B cell (primary cell): ENCODE measurements at regions of chr6 and their contacts with region 1.

Region 1: DNA sequence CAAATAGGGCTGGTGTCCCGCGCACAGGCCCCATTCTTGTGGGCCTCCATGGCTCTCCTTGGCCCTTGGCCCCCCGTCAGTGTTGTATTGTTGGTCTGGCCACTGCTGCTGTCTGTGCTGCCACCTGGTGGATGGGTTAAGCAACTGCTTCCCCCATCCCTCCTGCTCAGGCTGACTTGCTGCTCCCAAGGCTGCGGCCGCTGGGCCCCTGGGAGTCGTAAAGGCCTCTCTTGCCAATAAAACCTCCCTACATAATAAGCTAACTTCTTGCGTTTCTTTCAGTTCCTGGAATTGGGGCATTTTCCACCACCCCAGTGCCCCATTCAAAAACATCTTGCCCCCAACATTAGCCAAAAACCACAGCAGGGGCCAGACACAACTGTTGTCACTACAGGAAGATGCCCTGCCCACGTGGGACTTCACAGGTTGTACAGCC is 27.1 kb downstream of the CD83 start:
- DNase-seq: peak; percentile 85
- ATAC-seq: peak; percentile 83
- H3K4me3 ChIP-seq: no peak overlapping the region
- H3K4me3 Mint-ChIP-seq: no peak overlapping the region
- H3K27ac ChIP-seq: no peak overlapping the region
- H3K27ac Mint-ChIP-seq: peak overlapping the region; percentile 8
- H3K4me1 ChIP-seq: peaks cover 17 to 18% of the 10 kb centered on the region in 2 donors
- H3K4me1 Mint-ChIP-seq: peaks cover 59% of the 10 kb centered on the region
- H3K27me3 ChIP-seq: no peaks in the 10 kb centered on the region
- H3K27me3 Mint-ChIP-seq: no peaks in the 10 kb centered on the region
- CTCF ChIP-seq: peak; percentile 91

Region 2: DNA sequence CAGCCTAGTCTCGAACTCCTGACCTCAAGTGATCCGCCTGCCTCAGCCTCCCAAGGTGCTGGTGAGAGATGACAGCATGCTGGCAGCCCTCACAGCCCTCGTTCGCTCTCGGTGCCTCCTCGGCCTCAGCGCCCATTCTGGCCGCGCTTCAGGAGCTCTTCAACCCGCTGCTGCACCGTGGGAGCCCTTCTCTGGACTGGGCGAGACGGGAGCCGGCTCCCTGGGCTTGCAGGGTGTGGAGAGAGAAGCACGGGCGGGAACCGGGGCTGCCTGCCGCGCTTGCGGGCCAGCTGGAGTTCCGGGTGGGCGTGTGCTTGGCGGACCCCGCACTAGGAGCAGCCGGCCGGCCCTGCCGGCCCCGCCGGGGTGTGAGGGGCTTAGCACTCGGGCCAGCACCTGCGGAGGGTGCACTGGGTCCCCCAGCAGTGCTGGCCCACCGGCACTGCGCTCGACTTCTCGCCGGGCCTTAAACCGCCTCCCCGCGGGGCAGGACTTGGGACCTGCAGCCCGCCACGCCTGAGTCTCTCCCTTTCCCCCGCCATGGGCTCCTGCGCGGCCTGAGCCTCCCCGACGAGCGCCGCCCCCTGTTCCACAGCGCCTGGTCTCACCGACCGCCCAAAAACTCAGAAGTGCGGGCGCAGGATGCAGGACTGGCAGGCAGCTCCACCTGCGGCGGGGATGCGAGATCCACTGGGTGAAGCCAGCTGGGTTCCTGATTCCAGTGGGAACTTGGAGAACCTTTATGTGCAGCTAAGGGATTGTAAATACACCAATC is 401.5 kb before region 1 on chr6:
- CTCF ChIA-PET with region 1: no interaction called
- POLR2A ChIA-PET with region 1: no interaction called
- intact Hi-C with region 1: no loop called
- DNase-seq: no peak
- ATAC-seq: no peak
- H3K4me3 ChIP-seq: peak overlapping the region in 2 of 5 experiments; percentile 9 to 10
- H3K4me3 Mint-ChIP-seq: peak overlapping the region; percentile 13
- H3K27ac ChIP-seq: no peak overlapping the region
- H3K27ac Mint-ChIP-seq: no peak overlapping the region
- H3K4me1 ChIP-seq: no peaks in the 10 kb centered on the region
- H3K4me1 Mint-ChIP-seq: peaks cover 2% of the 10 kb centered on the region
- H3K27me3 ChIP-seq: no peaks in the 10 kb centered on the region
- H3K27me3 Mint-ChIP-seq: peaks cover under 1% of the 10 kb centered on the region
- CTCF ChIP-seq: no peak

Region 3: DNA sequence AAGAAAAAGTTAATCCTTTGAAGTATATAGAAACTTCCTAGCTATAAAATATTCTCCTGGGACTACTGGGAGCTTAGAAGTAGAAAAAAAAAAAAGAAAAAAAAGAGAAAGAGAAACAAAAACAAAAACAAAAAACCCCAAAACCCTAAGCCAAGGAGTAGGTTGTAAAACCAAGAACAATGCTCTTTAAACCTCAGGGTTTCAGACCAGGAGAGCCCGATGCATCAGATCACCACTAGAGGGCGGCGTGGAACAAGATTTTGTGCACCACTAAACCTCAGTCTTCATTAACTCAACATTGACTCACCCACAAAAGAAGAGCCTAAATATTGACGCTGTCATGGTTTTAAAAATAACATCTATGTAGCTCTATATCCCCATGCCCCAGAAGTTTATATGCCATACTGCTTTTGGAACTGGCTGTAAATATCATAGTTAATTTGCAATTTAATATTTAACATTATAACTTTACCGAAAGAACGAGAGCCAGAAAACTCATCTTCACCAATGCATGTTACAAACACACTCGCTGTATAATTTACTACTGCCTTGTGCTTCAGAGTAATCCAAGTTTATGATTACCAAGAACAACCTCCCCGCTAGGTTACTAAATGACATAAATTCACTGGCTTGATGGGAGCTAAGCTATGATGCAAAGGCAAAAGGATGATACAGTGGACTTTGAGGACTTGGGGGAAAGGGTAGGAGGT is 349.5 kb before region 1 on chr6:
- CTCF ChIA-PET with region 1: interaction called, 4 read pairs
- POLR2A ChIA-PET with region 1: no interaction called
- intact Hi-C with region 1: loop called (anchors 1 kb)
- DNase-seq: peak; percentile 81
- ATAC-seq: peak; percentile 91
- H3K4me3 ChIP-seq: no peak overlapping the region
- H3K4me3 Mint-ChIP-seq: no peak overlapping the region
- H3K27ac ChIP-seq: no peak overlapping the region
- H3K27ac Mint-ChIP-seq: no peak overlapping the region
- H3K4me1 ChIP-seq: no peaks in the 10 kb centered on the region
- H3K4me1 Mint-ChIP-seq: peaks cover 2% of the 10 kb centered on the region
- H3K27me3 ChIP-seq: no peaks in the 10 kb centered on the region
- H3K27me3 Mint-ChIP-seq: no peaks in the 10 kb centered on the region
- CTCF ChIP-seq: peak; percentile 93

Region 4: DNA sequence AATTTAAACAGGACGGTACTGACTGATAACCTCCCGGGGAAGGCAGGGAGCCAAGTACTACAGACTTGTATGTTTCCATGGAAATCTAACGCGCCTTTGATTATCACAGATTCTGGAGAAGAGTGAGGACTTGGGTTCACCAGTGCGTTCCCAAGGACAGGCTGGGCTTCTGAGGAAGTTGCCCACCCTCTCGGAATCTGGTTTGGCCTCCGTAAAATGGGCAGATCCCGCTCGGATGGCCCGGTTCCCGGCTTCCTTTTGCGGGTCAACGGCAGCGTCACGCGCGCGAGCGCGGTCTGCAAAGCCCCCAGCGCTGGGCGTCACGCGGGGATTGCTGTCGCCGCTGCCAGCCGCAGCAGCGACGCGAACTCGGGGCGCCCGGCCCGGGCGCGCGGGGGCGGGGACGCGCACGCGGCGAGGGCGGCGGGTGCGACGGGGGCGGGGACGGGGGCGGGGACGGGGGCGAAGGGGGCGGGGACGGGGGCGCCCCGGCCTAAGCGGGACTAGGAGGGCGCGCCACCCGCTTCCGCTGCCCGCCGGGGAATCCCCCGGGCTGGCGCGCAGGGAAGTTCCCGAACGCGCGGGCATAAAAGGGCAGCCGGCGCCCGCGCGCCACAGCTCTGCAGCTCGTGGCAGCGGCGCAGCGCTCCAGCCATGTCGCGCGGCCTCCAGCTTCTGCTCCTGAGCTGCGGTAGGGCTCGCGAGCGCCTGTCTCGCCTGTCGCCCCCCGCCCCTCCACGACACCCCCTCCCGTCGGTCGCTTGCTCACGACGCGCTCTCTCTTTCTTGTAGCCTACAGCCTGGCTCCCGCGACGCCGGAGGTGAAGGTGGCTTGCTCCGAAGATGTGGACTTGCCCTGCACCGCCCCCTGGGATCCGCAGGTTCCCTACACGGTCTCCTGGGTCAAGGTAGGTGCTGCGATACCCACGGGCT is 27.3 kb before region 1 on chr6 and contains the start of gene CD83:
- CTCF ChIA-PET with region 1: no interaction called
- POLR2A ChIA-PET with region 1: no interaction called
- intact Hi-C with region 1: loop called (anchors 2 kb)
- DNase-seq: peak; percentile 97
- ATAC-seq: peak; percentile 80
- H3K4me3 ChIP-seq: peak within 1 kb of the TSS; percentile 75 to 100 (median 94)
- H3K4me3 Mint-ChIP-seq: peak within 1 kb of the TSS; percentile 93
- H3K27ac ChIP-seq: peak within 1 kb of the TSS; percentile 99
- H3K27ac Mint-ChIP-seq: peak within 1 kb of the TSS; percentile 97
- H3K4me1 ChIP-seq: peaks cover 37 to 44% of the 10 kb centered on the region in 2 donors
- H3K4me1 Mint-ChIP-seq: peaks cover 37% of the 10 kb centered on the region
- H3K27me3 ChIP-seq: no peaks in the 10 kb centered on the region
- H3K27me3 Mint-ChIP-seq: no peaks in the 10 kb centered on the region
- CTCF ChIP-seq: no peak
- total RNA-seq, gene CD83: 332 and 339 TPM in 2 replicates

Region 5: DNA sequence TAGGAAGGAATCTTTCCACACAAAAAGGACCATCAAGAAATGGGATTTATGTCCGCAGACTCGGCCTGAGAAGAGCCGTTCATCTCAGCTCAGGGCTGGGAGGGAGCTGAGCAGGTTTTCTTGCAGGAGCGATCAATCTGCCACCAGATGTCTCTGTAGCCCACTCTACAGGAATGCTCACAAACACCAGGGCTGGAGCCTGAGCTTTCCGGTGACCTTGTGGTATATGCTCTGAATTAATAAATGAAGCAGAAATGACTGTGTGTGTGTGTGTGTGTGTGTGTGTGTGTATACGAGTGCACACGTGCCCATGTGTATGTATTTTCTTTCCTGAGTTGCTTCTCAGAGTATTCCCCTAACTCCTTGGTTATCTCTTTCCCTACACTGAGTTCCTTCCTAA is 15.1 kb before region 1 on chr6:
- CTCF ChIA-PET with region 1: interaction called, 44 read pairs
- POLR2A ChIA-PET with region 1: interaction called, 4 read pairs
- intact Hi-C with region 1: no loop called
- DNase-seq: peak; percentile 69
- ATAC-seq: no peak
- H3K4me3 ChIP-seq: peak overlapping the region in 1 of 5 experiments; percentile 15
- H3K4me3 Mint-ChIP-seq: peak overlapping the region; percentile 82
- H3K27ac ChIP-seq: peak overlapping the region in 1 of 2 donors; percentile 43
- H3K27ac Mint-ChIP-seq: peak overlapping the region; percentile 80
- H3K4me1 ChIP-seq: peaks cover 78 to 90% of the 10 kb centered on the region in 2 donors
- H3K4me1 Mint-ChIP-seq: peaks cover 93% of the 10 kb centered on the region
- H3K27me3 ChIP-seq: no peaks in the 10 kb centered on the region
- H3K27me3 Mint-ChIP-seq: no peaks in the 10 kb centered on the region
- CTCF ChIP-seq: no peak

Region 6: GRCh38 chr6:14170128-14170527 is 25.4 kb after region 1 on chr6:
- CTCF ChIA-PET with region 1: no interaction called
- POLR2A ChIA-PET with region 1: no interaction called
- intact Hi-C with region 1: no loop called
- DNase-seq: no peak
- ATAC-seq: no peak
- H3K4me3 ChIP-seq: no peak overlapping the region
- H3K4me3 Mint-ChIP-seq: no peak overlapping the region
- H3K27ac ChIP-seq: no peak overlapping the region
- H3K27ac Mint-ChIP-seq: no peak overlapping the region
- H3K4me1 ChIP-seq: no peaks in the 10 kb centered on the region
- H3K4me1 Mint-ChIP-seq: peaks cover 5% of the 10 kb centered on the region
- H3K27me3 ChIP-seq: no peaks in the 10 kb centered on the region
- H3K27me3 Mint-ChIP-seq: no peaks in the 10 kb centered on the region
- CTCF ChIP-seq: no peak

Region 7: DNA sequence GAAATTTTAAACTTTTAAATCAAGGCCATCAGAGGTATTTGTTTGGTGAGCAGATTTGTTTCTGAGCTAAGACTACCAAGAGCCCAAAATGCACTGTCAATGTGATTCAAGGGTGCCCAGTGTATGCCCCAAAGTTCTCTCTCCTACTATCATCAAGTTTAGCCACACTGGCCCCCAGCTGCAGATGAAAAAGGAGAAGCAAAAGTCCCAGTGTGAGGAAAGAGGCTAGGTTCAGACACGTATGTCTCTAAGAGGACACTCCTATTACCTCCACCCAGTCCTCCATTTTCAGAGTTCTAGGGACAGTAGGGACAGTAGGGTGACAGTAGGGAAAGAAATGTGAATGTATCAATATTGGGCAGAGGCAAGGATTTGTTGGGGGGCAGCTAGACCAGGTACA is 203.7 kb after region 1 on chr6:
- CTCF ChIA-PET with region 1: no interaction called
- POLR2A ChIA-PET with region 1: no interaction called
- intact Hi-C with region 1: no loop called
- DNase-seq: peak; percentile 28
- ATAC-seq: peak; percentile 39
- H3K4me3 ChIP-seq: no peak overlapping the region
- H3K4me3 Mint-ChIP-seq: peak overlapping the region; percentile 33
- H3K27ac ChIP-seq: no peak overlapping the region
- H3K27ac Mint-ChIP-seq: peak overlapping the region; percentile 44
- H3K4me1 ChIP-seq: peaks cover 20 to 25% of the 10 kb centered on the region in 2 donors
- H3K4me1 Mint-ChIP-seq: peaks cover 30% of the 10 kb centered on the region
- H3K27me3 ChIP-seq: no peaks in the 10 kb centered on the region
- H3K27me3 Mint-ChIP-seq: no peaks in the 10 kb centered on the region
- CTCF ChIP-seq: no peak